HCT116 (cell line): ENCODE measurements at regions of chr7 and their contacts with region 1.

Region 1: GRCh38 chr7:19713676-19714075 is 4.8 kb upstream of the POLR1F start:
- DNase-seq: peak; percentile 51
- ATAC-seq: peak; percentile 48; the same call in 1 of the 2 replicates
- H3K4me3 ChIP-seq: no peak overlapping the region
- H3K27ac ChIP-seq: no peak overlapping the region
- H3K4me1 ChIP-seq: peaks cover 0 to 7% of the 10 kb centered on the region in 2 experiments; a peak in 2 of 4 replicates
- H3K27me3 ChIP-seq: no peaks in the 10 kb centered on the region
- CTCF ChIP-seq: peak; percentile 50 to 74 (median 53); a peak in 5 of 6 replicates
- POLR2A ChIP-seq: no peak
- RAD21 ChIP-seq: peak; percentile 64

Region 2: DNA sequence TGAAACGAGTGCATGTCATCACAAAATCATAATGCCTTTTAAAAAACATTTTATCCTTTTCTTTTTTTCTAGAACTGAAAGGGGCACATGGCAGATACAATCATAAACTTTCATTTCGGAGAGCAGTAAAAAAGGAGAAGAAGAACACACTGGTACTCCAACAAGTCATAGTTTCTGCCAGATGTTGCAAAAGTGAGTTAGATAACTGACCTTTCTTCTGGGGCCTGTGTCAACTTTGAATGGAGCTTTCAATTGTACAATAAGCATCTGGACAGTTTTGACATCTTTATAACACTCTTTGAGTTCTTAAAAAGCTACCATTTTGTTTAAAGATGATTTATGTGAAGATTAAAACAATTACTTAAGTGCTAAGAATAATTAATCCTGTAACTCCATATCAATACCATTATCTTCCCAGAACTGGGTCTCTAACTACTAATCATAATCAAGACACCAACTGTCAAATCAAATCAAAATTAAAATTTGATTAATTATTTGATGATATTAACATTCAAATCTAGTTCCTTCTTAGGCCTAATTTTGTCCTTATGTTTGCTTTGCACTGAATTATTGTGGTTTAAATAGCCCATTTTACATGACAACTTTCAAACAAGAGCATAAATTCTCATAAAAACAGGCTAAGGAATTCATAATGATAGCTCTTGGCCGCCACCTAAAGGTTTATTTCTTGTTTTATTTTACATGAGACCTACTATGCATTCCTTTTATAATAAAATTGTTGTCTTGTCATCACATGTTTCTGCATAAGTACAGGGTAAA is 597.5 kb after region 1 on chr7:
- CTCF ChIA-PET with region 1: interaction called, 14 read pairs
- POLR2A ChIA-PET with region 1: no interaction called
- RAD21 ChIA-PET with region 1: no interaction called
- intact Hi-C with region 1: no loop called
- DNase-seq: peak; percentile 38
- ATAC-seq: no peak
- H3K4me3 ChIP-seq: no peak overlapping the region
- H3K27ac ChIP-seq: no peak overlapping the region
- H3K4me1 ChIP-seq: no peaks in the 10 kb centered on the region
- H3K27me3 ChIP-seq: no peaks in the 10 kb centered on the region
- CTCF ChIP-seq: peak; percentile 22 to 60 (median 59); a peak in 3 of 6 replicates
- POLR2A ChIP-seq: no peak
- RAD21 ChIP-seq: peak; percentile 75

Region 3: GRCh38 chr7:20647908-20648776 is 934.5 kb after region 1 on chr7:
- CTCF ChIA-PET with region 1: interaction called, 15 read pairs
- POLR2A ChIA-PET with region 1: no interaction called
- RAD21 ChIA-PET with region 1: no interaction called
- intact Hi-C with region 1: no loop called
- DNase-seq: peak; percentile 55
- ATAC-seq: peak; percentile 97
- H3K4me3 ChIP-seq: no peak overlapping the region
- H3K27ac ChIP-seq: no peak overlapping the region
- H3K4me1 ChIP-seq: peaks cover 0 to 4% of the 10 kb centered on the region in 2 experiments; a peak in 1 of 4 replicates
- H3K27me3 ChIP-seq: no peaks in the 10 kb centered on the region
- CTCF ChIP-seq: peak; percentile 51 to 79 (median 69)
- POLR2A ChIP-seq: no peak
- RAD21 ChIP-seq: peak; percentile 66